ENCODE measurements at regions of chr13 and their contacts with region 1.

Region 1: DNA sequence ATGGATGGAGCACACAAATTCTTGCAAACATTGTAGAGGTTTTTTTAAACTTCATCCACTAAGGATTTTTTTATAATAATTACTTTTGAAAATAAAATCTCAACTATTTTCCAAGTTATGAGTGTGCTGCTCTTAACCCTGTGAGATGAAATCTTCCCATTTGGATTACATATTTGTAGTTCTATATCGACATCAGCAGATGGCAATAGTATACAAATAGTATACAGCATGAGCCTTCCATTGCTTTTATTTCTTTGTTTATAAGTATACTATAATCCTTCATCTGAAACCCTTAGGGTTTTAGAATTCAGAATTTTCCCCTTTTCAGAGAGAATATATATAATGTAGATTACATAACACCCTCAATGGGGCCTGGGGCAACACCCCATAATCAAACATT is 70.5 kb downstream of the GJA3 start:
- DNase-seq: peak in 4 of 9 donors; percentile 18 to 24 (median 22)
- ATAC-seq: peak; percentile 54
- H3K4me3 ChIP-seq: no peak overlapping the region
- H3K4me3 Mint-ChIP-seq: no peak overlapping the region
- H3K27ac ChIP-seq: no peak overlapping the region
- H3K27ac Mint-ChIP-seq: peak overlapping the region in 1 of 9 donors; percentile 67
- H3K4me1 ChIP-seq: no peaks in the 10 kb centered on the region
- H3K4me1 Mint-ChIP-seq: no peaks in the 10 kb centered on the region
- H3K27me3 ChIP-seq: no peaks in the 10 kb centered on the region
- H3K27me3 Mint-ChIP-seq: no peaks in the 10 kb centered on the region

Region 2: GRCh38 chr13:20118268-20119140 is 28.2 kb after region 1 on chr13:
- CTCF ChIA-PET with region 1: no interaction called
- POLR2A ChIA-PET with region 1: no interaction called
- intact Hi-C with region 1: loop called in 1 of 2 experiments (anchors 2 kb)
- DNase-seq: peak in 7 of 9 donors; percentile 8 to 45 (median 27)
- ATAC-seq: peak; percentile 54
- H3K4me3 ChIP-seq: peak overlapping the region; percentile 71
- H3K4me3 Mint-ChIP-seq: peak overlapping the region; percentile 83 to 96 (median 93)
- H3K27ac ChIP-seq: peak overlapping the region; percentile 67
- H3K27ac Mint-ChIP-seq: peak overlapping the region; percentile 53 to 97 (median 93)
- H3K4me1 ChIP-seq: peaks cover 0 to 9% of the 10 kb centered on the region in 2 donors
- H3K4me1 Mint-ChIP-seq: peaks cover 9 to 25% (median 20%) of the 10 kb centered on the region in 7 donors
- H3K27me3 ChIP-seq: no peaks in the 10 kb centered on the region
- H3K27me3 Mint-ChIP-seq: peaks cover 0 to 20% (median 0%) of the 10 kb centered on the region in 5 donors

Region 3: GRCh38 chr13:20127577-20128466 is 37.5 kb after region 1 on chr13:
- CTCF ChIA-PET with region 1: no interaction called
- POLR2A ChIA-PET with region 1: no interaction called
- intact Hi-C with region 1: loop called in 1 of 2 experiments (anchors 5 kb)
- DNase-seq: peak in 7 of 9 donors; percentile 24 to 51 (median 37)
- ATAC-seq: peak; percentile 85
- H3K4me3 ChIP-seq: peak overlapping the region; percentile 60
- H3K4me3 Mint-ChIP-seq: peak overlapping the region; percentile 51 to 80 (median 73)
- H3K27ac ChIP-seq: no peak overlapping the region
- H3K27ac Mint-ChIP-seq: no peak overlapping the region
- H3K4me1 ChIP-seq: peaks cover 0 to 3% of the 10 kb centered on the region in 2 donors
- H3K4me1 Mint-ChIP-seq: peaks cover 0 to 7% (median 5%) of the 10 kb centered on the region in 7 donors
- H3K27me3 ChIP-seq: peaks cover 4 to 6% of the 10 kb centered on the region in 2 donors
- H3K27me3 Mint-ChIP-seq: peaks cover 7 to 45% (median 18%) of the 10 kb centered on the region in 5 donors